ENCODE measurements at regions of chr4 and their contacts with region 1.

Region 1: DNA sequence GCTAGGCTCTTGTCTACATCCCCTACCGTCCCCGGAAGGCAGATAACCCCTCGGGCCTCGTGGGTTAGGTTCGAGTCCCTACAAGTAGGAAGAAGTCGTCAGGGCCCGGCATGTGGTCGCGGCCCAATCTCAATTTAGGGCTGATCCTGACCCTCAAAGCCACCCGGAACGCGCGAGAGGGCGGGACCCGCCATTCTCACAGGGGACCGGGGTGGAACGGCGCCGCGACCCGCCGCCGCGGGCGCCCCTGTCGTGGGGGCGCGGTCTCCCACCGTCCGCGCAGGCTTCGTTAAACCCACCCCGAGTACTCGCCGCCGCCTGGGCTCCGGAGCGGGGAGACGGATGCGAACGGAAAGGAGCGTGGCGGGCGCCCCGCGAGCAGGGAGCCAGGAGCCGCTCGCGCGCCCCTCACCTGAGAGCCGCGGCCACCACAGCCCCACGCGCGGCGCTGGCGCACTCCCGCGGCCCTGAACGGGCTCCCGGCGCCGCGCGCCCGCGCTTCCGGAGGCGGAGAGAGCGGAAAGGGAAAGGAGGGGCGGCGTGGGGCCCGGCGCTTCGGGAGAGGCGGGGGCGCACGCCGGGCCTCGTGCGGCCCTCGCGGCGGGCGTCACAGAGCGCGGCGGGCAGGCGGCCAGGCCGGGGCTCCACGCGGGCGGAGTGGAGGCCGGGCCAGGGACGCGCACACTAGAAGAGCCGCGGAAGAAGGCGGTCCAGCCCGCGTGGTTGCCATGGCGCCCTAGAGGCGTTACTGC is at the start of gene CFAP97:
- DNase-seq: peak; percentile 80 to 94
- ATAC-seq: peak; percentile 86 to 94 (median 90)
- H3K4me3 ChIP-seq: peak within 1 kb of the TSS; percentile 74
- H3K4me3 Mint-ChIP-seq: peak within 1 kb of the TSS; percentile 97
- H3K27ac ChIP-seq: peak within 1 kb of the TSS; percentile 87
- H3K27ac Mint-ChIP-seq: peak within 1 kb of the TSS; percentile 93 to 96
- H3K4me1 ChIP-seq: peaks cover 29% of the 10 kb centered on the region
- H3K4me1 Mint-ChIP-seq: peaks cover 33 to 44% of the 10 kb centered on the region in 2 donors
- H3K27me3 ChIP-seq: no peaks in the 10 kb centered on the region
- H3K27me3 Mint-ChIP-seq: no peaks in the 10 kb centered on the region
- CTCF ChIP-seq: no peak
- total RNA-seq, gene CFAP97: 25.7 to 30.5 (median 25.9) TPM

Region 2: DNA sequence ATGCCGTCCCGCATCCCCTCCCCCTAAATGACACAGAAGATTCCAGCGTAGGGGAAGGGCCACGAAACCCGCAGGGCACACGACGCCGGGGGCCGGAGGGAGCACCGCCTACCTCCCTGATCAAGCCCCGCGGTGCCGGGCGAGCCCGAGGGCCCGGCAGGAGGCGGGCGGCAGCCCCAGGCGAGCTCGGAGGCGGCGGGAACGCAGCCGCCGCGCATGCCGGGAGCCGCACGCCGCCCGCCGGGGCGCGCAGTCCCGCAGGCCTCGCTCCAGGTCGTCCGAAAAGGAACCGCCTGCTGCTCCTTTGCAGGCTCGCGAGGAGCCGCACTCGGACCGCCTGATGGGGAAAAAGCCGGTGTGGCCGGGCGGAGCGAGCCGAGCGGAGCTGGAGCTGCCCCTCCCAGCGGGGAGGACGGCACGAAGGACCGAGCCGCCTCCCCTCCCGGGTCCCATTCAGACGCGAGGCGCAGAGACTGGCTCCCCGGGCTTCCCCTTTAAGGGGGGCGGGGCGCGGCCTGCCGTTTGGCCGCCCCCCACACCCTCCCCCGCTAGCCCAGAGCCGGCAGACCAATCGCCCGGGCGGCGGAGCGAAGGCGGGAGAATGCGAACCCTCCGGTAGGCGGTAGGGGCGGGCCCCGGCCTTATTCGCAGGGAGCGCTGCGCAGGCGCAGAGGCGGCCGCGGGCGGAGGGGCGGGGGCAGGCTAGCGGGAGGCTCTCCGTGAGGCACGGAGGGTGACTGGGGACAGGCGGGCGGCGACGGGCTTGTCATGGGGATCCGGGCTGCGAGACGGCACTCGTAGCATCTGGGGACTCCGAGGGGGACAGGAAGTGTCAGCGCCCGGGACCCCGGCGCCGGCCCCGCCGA is 1699.4 kb before region 1 on chr4:
- intact Hi-C with region 1: loop called (anchors 5 kb)
- DNase-seq: peak; percentile 98 to 100
- ATAC-seq: peak; percentile 79 to 95 (median 84)
- H3K4me3 ChIP-seq: peak overlapping the region; percentile 85
- H3K4me3 Mint-ChIP-seq: peak overlapping the region; percentile 93
- H3K27ac ChIP-seq: peak overlapping the region; percentile 90
- H3K27ac Mint-ChIP-seq: peak overlapping the region; percentile 88 to 92
- H3K4me1 ChIP-seq: peaks cover 3% of the 10 kb centered on the region
- H3K4me1 Mint-ChIP-seq: peaks cover 13 to 20% of the 10 kb centered on the region in 2 donors
- H3K27me3 ChIP-seq: no peaks in the 10 kb centered on the region
- H3K27me3 Mint-ChIP-seq: no peaks in the 10 kb centered on the region
- CTCF ChIP-seq: no peak

Region 3: GRCh38 chr4:185142912-185143595 is 60.6 kb before region 1 on chr4 and contains the start of gene SLC25A4:
- intact Hi-C with region 1: loop called (anchors 2 kb)
- DNase-seq: peak; percentile 82 to 91
- ATAC-seq: peak; percentile 95 to 97 (median 97)
- H3K4me3 ChIP-seq: peak within 1 kb of the TSS; percentile 63
- H3K4me3 Mint-ChIP-seq: peak within 1 kb of the TSS; percentile 92
- H3K27ac ChIP-seq: peak within 1 kb of the TSS; percentile 51
- H3K27ac Mint-ChIP-seq: peak within 1 kb of the TSS; percentile 65 to 76
- H3K4me1 ChIP-seq: peaks cover 14% of the 10 kb centered on the region
- H3K4me1 Mint-ChIP-seq: peaks cover 13 to 14% of the 10 kb centered on the region in 2 donors
- H3K27me3 ChIP-seq: peaks cover 6% of the 10 kb centered on the region
- H3K27me3 Mint-ChIP-seq: peaks cover 11 to 19% of the 10 kb centered on the region in 2 donors
- CTCF ChIP-seq: peak; percentile 43
- total RNA-seq, gene SLC25A4: 5.6 to 8.2 (median 7.5) TPM

Region 4: DNA sequence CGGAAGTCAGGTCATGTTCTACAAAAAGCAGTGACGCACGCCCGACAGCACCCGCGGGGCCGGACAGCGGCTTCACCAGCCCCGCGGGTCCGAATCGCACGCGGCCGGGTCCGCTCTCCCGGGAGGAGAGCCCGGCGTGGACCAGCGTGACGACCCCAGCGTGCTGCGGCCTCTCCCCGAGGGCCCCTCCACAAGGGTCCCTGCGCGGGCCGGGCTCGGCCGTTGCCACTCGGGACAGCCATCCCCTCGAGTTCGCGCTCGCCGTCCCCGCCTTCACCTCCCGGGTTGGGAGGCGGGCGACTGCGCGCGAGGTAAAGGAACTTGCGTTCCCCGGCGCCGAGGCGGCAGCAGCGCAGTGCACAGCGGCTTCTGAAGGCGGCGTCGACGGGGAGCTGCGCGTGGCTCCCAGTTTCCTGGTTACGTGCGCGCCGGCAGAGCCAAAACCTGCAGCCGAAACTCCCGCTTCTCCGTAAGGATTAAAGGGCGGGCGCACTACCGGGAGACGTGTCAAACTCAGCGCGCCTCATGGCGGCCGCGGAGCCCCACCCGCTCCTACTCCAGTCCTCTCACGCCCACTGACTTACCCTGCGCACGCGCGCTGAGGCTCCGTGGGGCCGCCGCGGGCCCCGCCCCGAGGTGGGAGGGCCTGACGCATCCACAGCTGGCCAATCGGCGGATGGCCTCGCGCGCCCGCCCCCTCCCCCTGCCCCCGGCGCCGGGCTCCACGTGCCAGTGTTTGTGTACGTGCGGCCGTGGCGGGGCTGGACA is 192.5 kb after region 1 on chr4:
- intact Hi-C with region 1: loop called (anchors 1 kb)
- DNase-seq: peak; percentile 97 to 98
- ATAC-seq: peak; percentile 89 to 98 (median 92)
- H3K4me3 ChIP-seq: peak overlapping the region; percentile 96
- H3K4me3 Mint-ChIP-seq: peak overlapping the region; percentile 96
- H3K27ac ChIP-seq: peak overlapping the region; percentile 99
- H3K27ac Mint-ChIP-seq: peak overlapping the region; percentile 94 to 97
- H3K4me1 ChIP-seq: peaks cover 7% of the 10 kb centered on the region
- H3K4me1 Mint-ChIP-seq: peaks cover 25 to 26% of the 10 kb centered on the region in 2 donors
- H3K27me3 ChIP-seq: no peaks in the 10 kb centered on the region
- H3K27me3 Mint-ChIP-seq: no peaks in the 10 kb centered on the region
- CTCF ChIP-seq: no peak

Region 5: GRCh38 chr4:185425647-185426352 is 222.1 kb after region 1 on chr4 and contains the start of gene UFSP2:
- intact Hi-C with region 1: loop called (anchors 10 kb)
- DNase-seq: peak; percentile 95 to 96
- ATAC-seq: peak; percentile 86 to 95 (median 86)
- H3K4me3 ChIP-seq: peak within 1 kb of the TSS; percentile 90
- H3K4me3 Mint-ChIP-seq: peak within 1 kb of the TSS; percentile 87
- H3K27ac ChIP-seq: peak within 1 kb of the TSS; percentile 93
- H3K27ac Mint-ChIP-seq: peak within 1 kb of the TSS; percentile 84 to 89
- H3K4me1 ChIP-seq: peaks cover 13% of the 10 kb centered on the region
- H3K4me1 Mint-ChIP-seq: peaks cover 9 to 32% of the 10 kb centered on the region in 2 donors
- H3K27me3 ChIP-seq: no peaks in the 10 kb centered on the region
- H3K27me3 Mint-ChIP-seq: peaks cover 2 to 11% of the 10 kb centered on the region in 2 donors
- CTCF ChIP-seq: no peak
- total RNA-seq, gene UFSP2: 14.0 to 18.8 (median 16.7) TPM

Measured in natural killer cell (primary cell).